ENCODE measurements at regions of chr19 and their contacts with region 1.

Region 1: GRCh38 chr19:2151339-2152229 is at the start of gene AP3D1:
- DNase-seq: peak; percentile 100
- H3K4me3 Mint-ChIP-seq: peak within 1 kb of the TSS; percentile 83
- H3K27ac Mint-ChIP-seq: peak within 1 kb of the TSS; percentile 94
- H3K4me1 Mint-ChIP-seq: peaks cover 40% of the 10 kb centered on the region
- H3K27me3 Mint-ChIP-seq: peaks cover 1% of the 10 kb centered on the region
- total RNA-seq, gene AP3D1: 120 and 124 TPM in 2 replicates

Region 2: DNA sequence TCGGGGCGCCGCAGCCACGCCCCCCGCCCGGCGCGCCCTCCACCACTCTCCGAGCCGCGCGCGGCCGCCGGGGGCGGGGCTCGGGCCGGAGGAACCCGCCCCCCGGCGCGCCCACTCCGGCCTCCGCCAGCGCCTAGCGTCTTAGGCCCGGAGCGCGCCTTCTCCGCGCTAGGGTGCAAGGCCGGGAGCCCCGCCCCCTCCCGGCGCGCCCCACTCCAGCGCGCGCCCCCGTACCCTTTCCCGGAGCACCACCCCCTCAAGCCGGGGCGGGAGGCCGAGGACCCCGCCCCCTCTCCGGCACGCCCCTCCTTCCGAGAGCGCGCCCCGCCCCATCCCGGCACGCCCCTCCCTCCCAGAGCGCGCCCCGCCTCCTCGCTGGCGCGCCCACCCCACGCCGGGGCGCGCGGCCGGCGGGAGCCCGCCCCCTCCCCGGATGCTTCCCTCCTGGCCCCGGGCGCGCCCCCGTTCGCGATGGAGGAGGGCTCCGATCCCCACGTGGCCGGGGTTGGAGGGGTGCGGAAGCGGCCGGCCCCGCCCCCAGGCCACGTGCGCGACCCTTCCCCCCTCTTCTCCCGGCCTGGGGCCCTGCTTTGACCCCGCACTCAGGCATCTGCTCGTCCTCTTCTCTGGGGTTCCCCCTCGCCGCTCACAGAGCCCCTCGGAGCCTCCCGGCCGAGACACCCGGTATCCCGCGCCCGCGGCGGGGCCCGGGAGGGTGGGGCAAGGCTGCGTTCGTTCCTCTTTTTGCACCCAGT is 287.7 kb before region 1 on chr19:
- intact Hi-C with region 1: loop called (anchors 5 kb)
- DNase-seq: peak; percentile 91
- H3K4me3 Mint-ChIP-seq: peak overlapping the region; percentile 76
- H3K27ac Mint-ChIP-seq: peak overlapping the region; percentile 80
- H3K4me1 Mint-ChIP-seq: peaks cover 22% of the 10 kb centered on the region
- H3K27me3 Mint-ChIP-seq: peaks cover 2% of the 10 kb centered on the region

Region 3: GRCh38 chr19:2041683-2042484 is 109.7 kb before region 1 on chr19:
- intact Hi-C with region 1: loop called (anchors 5 kb)
- DNase-seq: peak; percentile 99
- H3K4me3 Mint-ChIP-seq: peak overlapping the region; percentile 81
- H3K27ac Mint-ChIP-seq: peak overlapping the region; percentile 87
- H3K4me1 Mint-ChIP-seq: peaks cover 4% of the 10 kb centered on the region
- H3K27me3 Mint-ChIP-seq: no peaks in the 10 kb centered on the region

Region 4: DNA sequence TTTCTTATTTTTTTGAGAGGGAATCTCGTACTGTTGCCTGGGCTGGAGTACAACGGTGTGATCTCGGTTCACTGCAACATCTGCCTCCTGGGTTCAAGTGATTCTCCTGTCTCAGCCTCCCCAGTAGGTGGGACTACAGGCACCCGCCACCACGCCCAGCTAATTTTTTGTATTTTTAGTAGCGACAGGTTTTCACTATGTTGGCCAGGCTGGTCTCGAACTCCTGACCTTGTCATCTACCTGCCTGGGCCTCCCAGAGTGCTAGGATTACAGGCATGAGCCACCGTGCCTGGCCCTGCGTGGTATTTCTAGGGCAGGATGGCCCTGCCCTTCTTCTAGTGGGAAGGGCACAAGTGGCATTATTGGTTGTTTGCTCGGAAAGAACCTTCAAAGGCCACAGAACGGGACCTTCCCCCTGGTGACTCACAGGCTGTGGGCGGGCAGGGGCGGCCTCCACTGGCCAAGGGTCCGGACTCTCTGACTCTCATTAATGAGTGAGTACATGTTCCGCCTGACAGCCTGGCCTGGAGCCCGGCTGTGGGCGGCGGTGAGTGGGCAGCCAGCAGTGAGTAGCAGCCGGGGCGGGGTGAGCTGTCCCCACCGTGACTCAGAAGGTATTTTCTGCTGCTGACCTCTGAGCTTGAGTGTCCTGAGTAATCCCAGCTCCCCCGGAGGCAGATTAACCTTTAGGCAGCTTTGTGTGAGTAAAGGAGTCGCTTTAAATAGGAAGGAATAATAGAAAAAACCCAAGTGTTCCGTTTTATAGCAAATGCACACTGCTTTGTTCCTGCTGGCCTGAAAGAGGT is 17.2 kb after region 1 on chr19:
- intact Hi-C with region 1: loop called (anchors 1 kb)
- DNase-seq: peak; percentile 37
- H3K4me3 Mint-ChIP-seq: peak overlapping the region; percentile 81
- H3K27ac Mint-ChIP-seq: peak overlapping the region; percentile 87
- H3K4me1 Mint-ChIP-seq: peaks cover 53% of the 10 kb centered on the region
- H3K27me3 Mint-ChIP-seq: peaks cover 1% of the 10 kb centered on the region

Region 5: DNA sequence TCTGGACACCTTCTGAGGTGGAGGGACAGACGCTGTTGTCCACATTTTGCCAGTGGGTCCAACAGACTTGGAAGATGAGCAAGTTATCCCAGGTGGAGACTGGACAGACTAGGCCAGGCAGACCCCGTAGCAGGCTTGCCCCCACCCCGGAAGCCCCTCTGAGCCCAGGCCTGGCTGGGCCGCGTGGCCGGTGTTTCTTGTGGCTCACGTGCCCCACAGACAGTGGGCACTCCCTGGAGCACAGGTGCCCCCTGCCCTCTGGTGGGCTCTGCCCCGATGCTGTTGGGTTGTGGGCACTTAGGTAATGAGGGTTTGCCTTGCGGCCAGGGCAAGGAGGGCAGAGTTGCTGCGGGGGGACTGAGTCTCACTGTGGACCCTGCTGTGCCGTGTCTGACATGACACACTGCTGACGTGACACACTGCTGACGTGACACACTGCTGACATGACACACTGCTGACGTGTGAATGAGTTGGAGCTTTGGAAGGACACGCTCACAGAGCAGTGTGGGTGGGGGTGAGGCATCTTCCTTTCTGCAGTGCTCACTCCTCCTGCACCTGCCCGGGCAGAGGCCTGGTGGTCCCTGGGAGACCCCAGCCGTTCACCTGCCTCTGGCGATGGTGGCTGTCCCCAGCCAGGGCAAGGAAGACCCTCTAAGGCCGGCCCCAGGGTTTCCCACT is 37.3 kb after region 1 on chr19:
- intact Hi-C with region 1: no loop called
- DNase-seq: no peak
- H3K4me3 Mint-ChIP-seq: no peak overlapping the region
- H3K27ac Mint-ChIP-seq: peak overlapping the region; percentile 58
- H3K4me1 Mint-ChIP-seq: peaks cover 9% of the 10 kb centered on the region
- H3K27me3 Mint-ChIP-seq: no peaks in the 10 kb centered on the region

Region 6: DNA sequence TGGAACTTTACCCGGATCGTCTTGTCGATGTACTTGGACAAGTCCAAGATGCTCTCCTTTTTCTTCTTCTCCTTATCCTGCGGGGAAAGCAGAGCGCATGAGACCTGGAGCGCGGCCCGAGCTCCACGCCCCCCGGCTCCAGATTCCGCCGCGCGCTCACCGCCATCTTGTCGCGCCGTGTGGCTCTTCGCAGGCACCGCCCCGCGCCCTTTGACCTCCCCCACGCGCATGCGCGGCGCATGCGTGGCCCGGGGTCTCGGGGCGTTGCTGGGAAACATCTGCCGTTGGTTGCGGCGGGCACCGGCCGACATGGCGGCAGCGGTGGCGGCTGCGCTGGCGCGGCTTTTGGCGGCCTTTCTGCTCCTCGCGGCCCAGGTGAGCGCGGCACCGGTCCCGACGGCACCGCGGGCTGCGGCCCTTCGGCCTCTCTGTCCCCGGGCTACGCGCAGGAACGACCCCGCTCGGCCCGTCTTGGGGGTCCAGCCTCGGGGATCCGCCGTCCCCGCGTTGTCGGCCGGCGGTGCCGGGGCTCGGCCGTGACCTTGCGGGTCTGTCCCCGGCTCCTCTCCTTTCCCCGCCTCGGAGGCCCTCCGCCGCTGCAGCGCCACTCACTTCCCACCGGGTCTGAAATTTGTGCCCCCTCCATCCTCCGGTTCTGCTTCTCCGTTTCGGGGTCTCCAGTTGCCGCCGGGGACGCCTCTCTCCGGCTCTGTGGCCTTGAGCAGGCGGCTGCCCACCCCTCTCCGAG is 177.0 kb after region 1 on chr19 and contains the starts of genes LSM7 and SPPL2B:
- intact Hi-C with region 1: loop called (anchors 2 kb)
- DNase-seq: peak; percentile 91
- H3K4me3 Mint-ChIP-seq: peak within 1 kb of the TSS; percentile 100
- H3K27ac Mint-ChIP-seq: peak within 1 kb of the TSS; percentile 100
- H3K4me1 Mint-ChIP-seq: peaks cover 63% of the 10 kb centered on the region
- H3K27me3 Mint-ChIP-seq: no peaks in the 10 kb centered on the region
- total RNA-seq, gene LSM7: 180 and 193 TPM in 2 replicates
- total RNA-seq, gene SPPL2B: 71.2 and 71.4 TPM in 2 replicates

Region 7: GRCh38 chr19:2782936-2783780 is 631.6 kb after region 1 on chr19 and contains the start of gene SGTA:
- intact Hi-C with region 1: loop called (anchors 10 kb)
- DNase-seq: peak; percentile 96
- H3K4me3 Mint-ChIP-seq: peak within 1 kb of the TSS; percentile 98
- H3K27ac Mint-ChIP-seq: peak within 1 kb of the TSS; percentile 89
- H3K4me1 Mint-ChIP-seq: peaks cover 62% of the 10 kb centered on the region
- H3K27me3 Mint-ChIP-seq: no peaks in the 10 kb centered on the region
- total RNA-seq, gene SGTA: 73.4 and 77.8 TPM in 2 replicates

Measured in activated T-helper 1 cell treated with anti-CD3 and anti-CD28 coated beads, Interleukin-12 subunit alpha, Interleukin-12 subunit beta, Interleukin-2, Interleukin-4 antibody, amounts not matched to agents 30 ng/mL and 10 ng/mL and 1 ng/mL, durations not matched to agents 14 hours and 24 hours and 36 hours (primary cell).